Heart left ventricle (tissue), 16 donors: ENCODE measurements at regions of chr17 and their contacts with region 1.

Region 1: DNA sequence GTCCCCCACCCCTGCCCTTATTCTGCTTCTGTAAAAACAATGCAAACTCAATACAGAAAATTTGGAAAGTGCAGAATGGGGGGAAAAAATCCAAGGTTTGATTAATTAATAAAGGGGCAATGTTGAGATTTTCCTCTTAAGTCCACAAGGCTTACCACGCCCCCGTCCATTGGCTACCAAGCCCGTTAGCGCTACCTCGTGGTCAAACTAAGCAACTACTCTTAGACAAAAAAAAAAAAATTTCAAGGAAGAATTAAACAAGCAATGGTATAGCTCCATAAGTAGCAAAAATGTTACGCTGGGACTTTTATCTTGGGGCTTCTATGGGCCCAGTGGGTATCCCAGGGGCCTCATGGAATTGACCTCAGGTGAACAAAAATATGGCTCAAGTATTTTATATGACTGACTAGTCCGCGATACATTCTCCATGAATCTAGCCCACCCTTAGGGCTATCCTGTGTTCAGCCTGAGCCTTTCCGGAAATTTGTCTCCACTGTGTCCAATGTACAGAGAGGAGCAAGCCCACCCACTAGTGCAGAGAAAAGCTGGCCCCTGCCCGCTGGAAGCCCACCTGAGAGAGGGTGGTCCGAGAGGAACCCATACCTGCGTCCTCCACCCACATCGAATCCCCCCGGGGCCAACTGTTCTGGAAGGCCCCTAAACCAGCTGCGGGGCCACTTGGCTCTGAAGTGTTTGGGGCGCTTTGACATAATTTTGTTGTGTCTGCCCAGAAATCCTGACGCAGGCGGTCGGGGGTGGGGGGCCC is 19.1 kb upstream of the TEX2 start:
- DNase-seq: peak in 4 of 5 donors; percentile 42 to 63 (median 62)
- ATAC-seq: peak in 3 of 4 donors; percentile 7 to 53 (median 34)
- H3K4me3 ChIP-seq: no peak overlapping the region
- H3K27ac ChIP-seq: peak overlapping the region in 1 of 12 donors; percentile 7
- H3K4me1 ChIP-seq: peaks cover 0 to 38% (median 20%) of the 10 kb centered on the region in 12 donors
- H3K27me3 ChIP-seq: no peaks in the 10 kb centered on the region
- CTCF ChIP-seq: peak; percentile 74 to 86 (median 80)
- POLR2A ChIP-seq: no peak

Region 2: DNA sequence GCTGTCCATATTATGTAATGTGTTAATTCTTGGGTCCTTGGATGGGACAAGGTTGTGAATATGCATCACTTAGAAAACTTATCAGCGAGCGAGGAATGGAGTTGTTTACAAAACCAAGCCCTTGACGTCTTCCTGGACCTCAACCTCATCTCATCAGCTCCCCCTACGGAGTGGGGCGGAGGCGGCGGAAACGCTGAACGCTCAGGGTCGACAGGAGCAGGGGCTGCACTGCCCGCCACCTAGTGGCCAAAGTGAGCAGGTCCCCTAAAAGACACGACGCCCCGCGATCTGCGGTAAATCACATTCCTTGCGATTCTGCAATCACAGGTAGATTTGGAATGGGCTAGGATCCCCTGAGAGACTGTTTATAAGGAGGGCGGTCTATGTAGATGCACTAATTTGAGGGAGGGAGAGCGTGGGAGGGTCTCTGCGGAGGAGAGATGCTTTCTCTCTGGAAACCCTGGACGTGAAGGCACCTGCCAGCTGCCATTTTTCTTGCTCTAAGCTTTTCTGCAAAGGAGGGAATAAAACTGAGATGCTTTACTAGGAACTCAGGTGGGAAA is 256.3 kb before region 1 on chr17:
- intact Hi-C with region 1: loop called (anchors 2 to 10 kb)
- DNase-seq: peak; percentile 77 to 92 (median 82)
- ATAC-seq: peak; percentile 56 to 87 (median 82)
- H3K4me3 ChIP-seq: peak overlapping the region in 7 of 12 donors; percentile 0 to 37 (median 16)
- H3K27ac ChIP-seq: peak overlapping the region in 8 of 12 donors; percentile 3 to 77 (median 54)
- H3K4me1 ChIP-seq: peaks cover 0 to 33% (median 7%) of the 10 kb centered on the region in 12 donors
- H3K27me3 ChIP-seq: no peaks in the 10 kb centered on the region
- CTCF ChIP-seq: peak; percentile 90 to 99 (median 94)
- POLR2A ChIP-seq: no peak

Region 3: DNA sequence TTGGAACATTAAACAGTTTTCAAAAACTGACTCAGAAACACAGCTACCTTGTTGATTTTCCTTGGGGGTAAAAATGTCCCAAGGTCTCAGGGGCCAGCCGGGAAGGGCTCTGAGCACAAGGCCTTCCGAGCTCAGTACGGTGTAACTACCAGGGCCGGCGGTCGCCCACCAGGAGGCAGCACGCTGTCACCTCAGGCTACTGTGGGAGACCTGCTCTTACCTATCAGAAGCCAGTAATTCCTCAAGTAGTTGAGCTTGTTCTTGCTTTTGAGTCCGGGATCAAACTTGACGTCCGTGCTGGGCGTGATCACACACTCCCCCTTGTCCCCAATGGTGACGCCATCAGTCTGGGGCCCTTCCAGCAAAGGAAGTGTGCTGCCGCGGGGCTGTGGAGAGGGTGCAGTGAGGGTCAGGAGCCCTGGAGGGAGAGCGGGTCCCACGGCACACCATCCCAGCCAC is 218.3 kb before region 1 on chr17:
- intact Hi-C with region 1: loop called in 1 of 10 experiments (anchors 10 kb)
- DNase-seq: peak; percentile 45 to 80 (median 46)
- ATAC-seq: peak; percentile 56 to 82 (median 76)
- H3K4me3 ChIP-seq: no peak overlapping the region
- H3K27ac ChIP-seq: peak overlapping the region in 1 of 12 donors; percentile 55
- H3K4me1 ChIP-seq: peaks cover 0 to 53% (median 0%) of the 10 kb centered on the region in 12 donors
- H3K27me3 ChIP-seq: no peaks in the 10 kb centered on the region
- CTCF ChIP-seq: peak; percentile 29 to 63 (median 52)
- POLR2A ChIP-seq: no peak

Region 4: GRCh38 chr17:64145757-64146417 is 136.3 kb before region 1 on chr17:
- intact Hi-C with region 1: loop called (anchors 1 to 5 kb)
- DNase-seq: peak; percentile 96 to 99 (median 98)
- ATAC-seq: peak; percentile 95 to 97 (median 96)
- H3K4me3 ChIP-seq: peak overlapping the region; percentile 58 to 97 (median 82)
- H3K27ac ChIP-seq: peak overlapping the region; percentile 90 to 100 (median 97)
- H3K4me1 ChIP-seq: peaks cover 0 to 41% (median 30%) of the 10 kb centered on the region in 12 donors
- H3K27me3 ChIP-seq: no peaks in the 10 kb centered on the region
- CTCF ChIP-seq: peak in 1 of 12 donors; percentile 5
- POLR2A ChIP-seq: peak; percentile 86 to 98